Head of caudate nucleus (tissue), 42 donors: ENCODE measurements at regions of chr12 and their contacts with region 1.

Region 1: GRCh38 chr12:32558903-32559302 is 120.2 kb upstream of the DNM1L start:
- DNase-seq: no peak

Region 2: DNA sequence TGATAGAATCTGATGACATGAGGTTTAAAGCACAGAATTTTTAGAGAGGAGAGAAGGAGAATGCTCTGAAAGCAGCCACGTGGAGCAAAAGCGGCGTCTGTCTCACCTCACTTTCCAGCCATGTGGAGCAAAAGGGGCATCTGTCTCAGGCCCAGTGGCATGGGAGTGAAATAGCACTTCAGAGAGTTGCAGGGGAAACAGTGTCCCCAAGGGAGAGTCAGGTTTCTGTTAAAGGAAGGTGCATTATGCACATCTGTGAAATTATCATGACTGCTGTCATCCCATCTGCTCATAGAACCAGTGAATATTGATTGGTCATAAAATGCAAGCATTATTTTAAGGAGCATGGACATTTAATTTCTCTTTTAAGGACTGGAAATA is 328.3 kb before region 1 on chr12:
- intact Hi-C with region 1: no loop called
- DNase-seq: no peak

Region 3: GRCh38 chr12:32455607-32456071 is 103.3 kb before region 1 on chr12:
- intact Hi-C with region 1: loop called (anchors 10 kb)
- DNase-seq: peak in 11 of 42 donors; percentile 15 to 73 (median 53)